ENCODE measurements at regions of chr4 and their contacts with region 1.

Region 1: GRCh38 chr4:8241895-8242696 is 27.5 kb upstream of the HTRA3 start:
- DNase-seq: peak; percentile 85 to 96
- H3K4me3 ChIP-seq: no peak overlapping the region
- H3K27ac ChIP-seq: peak overlapping the region in 2 of 5 donors; percentile 32 to 57
- H3K4me1 ChIP-seq: peaks cover 5 to 41% (median 19%) of the 10 kb centered on the region in 4 donors
- H3K27me3 ChIP-seq: no peaks in the 10 kb centered on the region
- CTCF ChIP-seq: peak in 6 of 7 experiments; percentile 86 to 97 (median 92)
- EP300 ChIP-seq: no peak
- POLR2A ChIP-seq: no peak

Region 2: GRCh38 chr4:8101213-8102075 is 140.7 kb before region 1 on chr4:
- intact Hi-C with region 1: no loop called
- DNase-seq: peak in 1 of 2 donors; percentile 55
- H3K4me3 ChIP-seq: no peak overlapping the region
- H3K27ac ChIP-seq: peak overlapping the region in 1 of 5 donors; percentile 38
- H3K4me1 ChIP-seq: no peaks in the 10 kb centered on the region
- H3K27me3 ChIP-seq: peaks cover 0 to 5% (median 0%) of the 10 kb centered on the region in 3 donors
- CTCF ChIP-seq: no peak
- EP300 ChIP-seq: no peak
- POLR2A ChIP-seq: no peak

Region 3: GRCh38 chr4:8198906-8199593 is 43.0 kb before region 1 on chr4 and contains the start of gene SH3TC1:
- intact Hi-C with region 1: no loop called
- DNase-seq: peak; percentile 95 to 98
- H3K4me3 ChIP-seq: peak within 1 kb of the TSS; percentile 44 to 52 (median 48)
- H3K27ac ChIP-seq: peak within 1 kb of the TSS; percentile 82 to 91 (median 88)
- H3K4me1 ChIP-seq: peaks cover 27 to 78% (median 52%) of the 10 kb centered on the region in 4 donors
- H3K27me3 ChIP-seq: no peaks in the 10 kb centered on the region
- CTCF ChIP-seq: no peak
- EP300 ChIP-seq: no peak
- POLR2A ChIP-seq: peak in 2 of 4 donors; percentile 62 to 69
- total RNA-seq, gene SH3TC1: 22.8 to 96.2 (median 52.5) TPM

Region 4: GRCh38 chr4:8409264-8410065 is 167.4 kb after region 1 on chr4:
- intact Hi-C with region 1: loop called (anchors 5 kb)
- DNase-seq: peak; percentile 63 to 67
- H3K4me3 ChIP-seq: no peak overlapping the region
- H3K27ac ChIP-seq: peak overlapping the region in 1 of 5 donors; percentile 57
- H3K4me1 ChIP-seq: peaks cover 11 to 33% (median 18%) of the 10 kb centered on the region in 4 donors
- H3K27me3 ChIP-seq: no peaks in the 10 kb centered on the region
- CTCF ChIP-seq: no peak
- EP300 ChIP-seq: no peak
- POLR2A ChIP-seq: no peak

Measured in stomach (tissue), 19 donors.